Right ventricle myocardium inferior (tissue), 1 donor: ENCODE measurements at regions of chr2 and their contacts with region 1.

Region 1: DNA sequence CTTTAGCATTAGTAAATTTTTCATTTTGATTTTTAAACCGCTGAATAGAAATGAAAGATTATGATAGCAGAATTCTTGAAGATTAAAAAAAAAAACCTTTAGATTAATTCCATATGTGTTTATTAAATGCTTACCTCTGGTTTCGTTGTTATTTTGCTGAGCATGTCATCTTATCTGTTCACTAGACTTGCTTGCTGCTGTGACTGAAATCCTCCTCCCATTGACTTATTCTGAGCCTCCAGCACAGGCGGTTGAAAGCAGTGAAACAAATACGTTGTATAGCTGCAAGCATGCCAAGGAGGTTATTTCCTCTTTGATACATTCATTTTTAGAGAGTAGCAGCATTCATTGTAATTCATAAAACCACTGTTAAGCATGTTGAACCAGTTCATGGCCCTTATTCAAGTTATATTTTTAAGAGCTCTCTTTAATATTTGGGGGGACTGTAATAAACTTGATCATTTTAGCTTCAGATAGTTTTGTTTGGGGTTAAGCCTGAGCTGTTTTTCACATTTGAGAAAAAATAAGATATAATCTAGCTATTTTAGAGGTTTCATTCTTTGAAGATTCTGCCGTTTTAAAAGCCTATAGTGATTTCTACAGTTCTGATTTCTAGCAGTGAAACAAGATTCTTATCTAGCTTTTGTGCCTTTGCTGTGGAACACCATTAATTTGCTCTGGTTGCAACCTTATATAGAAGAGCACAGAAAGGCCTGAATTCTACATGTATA is at the start of gene HTR2B:
- DNase-seq: no peak
- ATAC-seq: no peak
- total RNA-seq, gene HTR2B: not detected

Region 2: DNA sequence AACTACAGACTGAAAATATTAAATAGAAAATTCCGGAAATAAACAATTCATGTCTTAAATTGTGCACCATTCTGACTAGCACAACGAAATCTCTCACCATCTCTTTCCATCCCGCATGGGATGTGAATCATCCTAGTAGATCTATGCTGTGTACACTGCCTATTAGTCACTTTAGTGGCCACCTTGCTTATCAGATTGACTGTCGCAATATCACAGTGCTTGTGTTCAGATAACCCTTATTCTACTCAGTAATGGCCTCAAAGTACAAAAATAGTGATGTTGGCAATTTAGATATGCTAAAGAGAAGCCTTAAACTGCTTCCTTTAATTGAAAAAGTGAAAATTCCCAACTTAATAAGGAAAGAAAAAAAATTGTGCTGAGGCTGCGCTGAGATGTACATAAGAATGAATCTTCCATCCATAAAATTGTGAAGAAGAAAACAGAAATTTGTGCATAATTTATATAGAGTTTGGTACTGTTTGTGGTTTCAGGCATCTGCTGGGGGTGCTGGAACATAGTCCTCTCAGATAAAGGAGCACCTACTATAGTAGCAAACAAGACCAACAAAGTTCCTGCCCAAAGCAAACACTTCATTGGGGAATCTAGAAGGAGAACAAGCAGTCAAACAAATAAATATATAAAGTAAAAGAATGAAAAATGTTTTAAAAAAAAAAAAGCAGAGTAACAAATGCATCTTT is 56.3 kb before region 1 on chr2:
- intact Hi-C with region 1: no loop called
- DNase-seq: no peak
- ATAC-seq: no peak

Region 3: GRCh38 chr2:231198291-231199173 is 73.5 kb after region 1 on chr2 and contains the start of gene ARMC9:
- intact Hi-C with region 1: loop called (anchors 5 kb)
- DNase-seq: peak; percentile 86
- ATAC-seq: peak; percentile 96
- total RNA-seq, gene ARMC9: 1.7 TPM